CD8-positive, alpha-beta T cell (primary cell): ENCODE measurements at regions of chr18 and their contacts with region 1.

Region 1: DNA sequence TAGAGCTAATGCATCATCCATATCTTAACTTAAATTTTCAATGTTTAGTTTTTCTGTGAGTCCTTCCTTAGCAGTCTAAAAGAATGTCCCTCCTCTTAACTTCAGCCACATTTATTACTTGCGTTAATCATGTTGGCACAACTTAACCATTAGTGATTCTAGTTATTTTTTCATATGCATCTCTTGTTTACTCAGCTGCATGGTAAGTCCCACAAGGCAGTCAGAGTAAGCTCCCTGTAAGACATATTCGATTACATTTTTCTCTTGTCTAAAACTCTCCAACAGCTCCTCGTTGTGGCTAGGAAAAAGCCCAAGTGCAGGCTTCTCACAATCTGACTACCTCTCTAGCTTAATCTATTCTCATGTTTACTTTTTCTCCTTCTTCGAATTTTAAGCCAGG is 2045.3 kb upstream of the PIK3C3 start:
- DNase-seq: no peak
- ATAC-seq: no peak
- H3K4me3 ChIP-seq: no peak overlapping the region
- H3K4me3 Mint-ChIP-seq: no peak overlapping the region
- H3K27ac ChIP-seq: no peak overlapping the region
- H3K27ac Mint-ChIP-seq: no peak overlapping the region
- H3K4me1 ChIP-seq: no peaks in the 10 kb centered on the region
- H3K4me1 Mint-ChIP-seq: no peaks in the 10 kb centered on the region
- H3K27me3 ChIP-seq: no peaks in the 10 kb centered on the region
- H3K27me3 Mint-ChIP-seq: no peaks in the 10 kb centered on the region
- CTCF ChIP-seq: no peak

Region 2: GRCh38 chr18:38237796-38238195 is 1671.9 kb before region 1 on chr18:
- CTCF ChIA-PET with region 1: no interaction called
- POLR2A ChIA-PET with region 1: no interaction called
- intact Hi-C with region 1: loop called in 1 of 2 experiments (anchors 5 kb)
- DNase-seq: no peak
- ATAC-seq: no peak
- H3K4me3 ChIP-seq: no peak overlapping the region
- H3K4me3 Mint-ChIP-seq: no peak overlapping the region
- H3K27ac ChIP-seq: no peak overlapping the region
- H3K27ac Mint-ChIP-seq: no peak overlapping the region
- H3K4me1 ChIP-seq: no peaks in the 10 kb centered on the region
- H3K4me1 Mint-ChIP-seq: no peaks in the 10 kb centered on the region
- H3K27me3 ChIP-seq: no peaks in the 10 kb centered on the region
- H3K27me3 Mint-ChIP-seq: no peaks in the 10 kb centered on the region
- CTCF ChIP-seq: no peak

Region 3: GRCh38 chr18:39935598-39935997 is 25.9 kb after region 1 on chr18:
- CTCF ChIA-PET with region 1: no interaction called
- POLR2A ChIA-PET with region 1: no interaction called
- intact Hi-C with region 1: no loop called
- DNase-seq: no peak
- ATAC-seq: no peak
- H3K4me3 ChIP-seq: no peak overlapping the region
- H3K4me3 Mint-ChIP-seq: no peak overlapping the region
- H3K27ac ChIP-seq: no peak overlapping the region
- H3K27ac Mint-ChIP-seq: no peak overlapping the region
- H3K4me1 ChIP-seq: no peaks in the 10 kb centered on the region
- H3K4me1 Mint-ChIP-seq: no peaks in the 10 kb centered on the region
- H3K27me3 ChIP-seq: no peaks in the 10 kb centered on the region
- H3K27me3 Mint-ChIP-seq: no peaks in the 10 kb centered on the region
- CTCF ChIP-seq: no peak

Region 4: DNA sequence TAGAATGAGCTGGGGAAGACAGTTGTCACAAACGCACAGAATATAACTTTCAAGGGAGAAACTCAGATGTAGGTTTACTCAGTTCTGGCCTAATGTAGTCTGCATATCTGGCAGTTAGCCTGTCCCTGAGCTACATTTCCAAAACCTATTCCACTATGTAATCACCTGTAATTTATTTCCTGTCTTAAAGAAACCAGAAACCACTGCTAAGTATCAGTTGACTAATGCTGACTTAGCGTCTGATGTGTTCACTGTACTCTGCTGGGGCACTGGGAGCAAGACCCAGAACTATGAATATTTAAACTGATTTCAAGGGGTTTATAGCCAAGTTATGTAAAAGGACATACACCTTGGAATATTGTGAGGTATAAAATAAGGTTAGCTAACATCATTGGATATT is 50.1 kb after region 1 on chr18:
- CTCF ChIA-PET with region 1: no interaction called
- POLR2A ChIA-PET with region 1: no interaction called
- intact Hi-C with region 1: loop called in 1 of 2 experiments (anchors 10 kb)
- DNase-seq: no peak
- ATAC-seq: no peak
- H3K4me3 ChIP-seq: no peak overlapping the region
- H3K4me3 Mint-ChIP-seq: no peak overlapping the region
- H3K27ac ChIP-seq: no peak overlapping the region
- H3K27ac Mint-ChIP-seq: no peak overlapping the region
- H3K4me1 ChIP-seq: no peaks in the 10 kb centered on the region
- H3K4me1 Mint-ChIP-seq: no peaks in the 10 kb centered on the region
- H3K27me3 ChIP-seq: no peaks in the 10 kb centered on the region
- H3K27me3 Mint-ChIP-seq: no peaks in the 10 kb centered on the region
- CTCF ChIP-seq: no peak